Endothelial cell of umbilical vein (primary cell): ENCODE measurements at regions of chr2 and their contacts with region 1.

Region 1: GRCh38 chr2:217851191-217852020 is 151.4 kb downstream of the TNS1 start:
- DNase-seq: peak; percentile 18
- H3K4me3 ChIP-seq: no peak overlapping the region
- H3K27ac ChIP-seq: no peak overlapping the region
- H3K4me1 ChIP-seq: peaks cover 33% of the 10 kb centered on the region
- H3K27me3 ChIP-seq: no peaks in the 10 kb centered on the region
- CTCF ChIP-seq: no peak
- POLR2A ChIP-seq: no peak

Region 2: DNA sequence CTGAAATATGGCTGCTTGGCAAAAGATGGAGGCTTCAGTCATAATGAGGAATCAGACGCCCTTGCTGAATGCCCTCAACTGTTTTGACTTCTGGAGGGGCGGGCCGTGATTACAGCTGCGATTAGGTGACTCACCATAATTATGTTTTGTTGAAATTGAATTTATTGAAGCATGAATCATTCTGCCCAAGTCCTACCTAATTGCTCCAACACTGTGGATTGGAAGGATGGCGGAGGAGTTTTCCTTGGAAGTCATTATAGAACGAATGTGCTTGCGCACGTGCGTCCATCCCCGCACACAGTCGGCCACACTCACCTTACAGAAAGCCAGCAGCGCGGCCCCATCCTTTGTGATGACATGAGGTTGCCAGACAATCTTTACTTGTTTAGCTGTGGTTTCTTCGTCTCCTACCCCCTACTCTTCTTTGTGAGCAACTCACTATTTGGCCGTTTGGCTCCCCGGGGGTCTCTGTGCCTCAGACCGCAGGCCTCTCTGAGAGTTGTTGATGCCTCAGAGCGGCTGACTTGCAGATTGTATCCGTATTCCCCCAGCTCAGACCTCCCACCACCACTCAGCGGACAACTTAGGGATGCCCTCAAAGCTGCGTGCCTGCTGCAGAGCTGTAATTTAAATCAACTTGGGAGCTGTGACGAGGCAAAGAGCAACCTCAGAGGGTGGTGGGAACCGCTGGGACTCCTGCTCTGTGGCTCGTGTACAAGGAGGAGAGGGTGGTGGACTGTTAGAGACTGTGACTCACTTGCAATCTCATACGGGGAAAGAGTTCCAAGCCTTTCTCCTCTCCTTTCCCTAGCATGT is 362.1 kb before region 1 on chr2:
- CTCF ChIA-PET with region 1: no interaction called
- POLR2A ChIA-PET with region 1: no interaction called
- dilution Hi-C with region 1: no loop called
- intact Hi-C with region 1: no loop called
- DNase-seq: no peak
- H3K4me3 ChIP-seq: no peak overlapping the region
- H3K27ac ChIP-seq: no peak overlapping the region
- H3K4me1 ChIP-seq: no peaks in the 10 kb centered on the region
- H3K27me3 ChIP-seq: no peaks in the 10 kb centered on the region
- CTCF ChIP-seq: no peak
- POLR2A ChIP-seq: no peak

Region 3: DNA sequence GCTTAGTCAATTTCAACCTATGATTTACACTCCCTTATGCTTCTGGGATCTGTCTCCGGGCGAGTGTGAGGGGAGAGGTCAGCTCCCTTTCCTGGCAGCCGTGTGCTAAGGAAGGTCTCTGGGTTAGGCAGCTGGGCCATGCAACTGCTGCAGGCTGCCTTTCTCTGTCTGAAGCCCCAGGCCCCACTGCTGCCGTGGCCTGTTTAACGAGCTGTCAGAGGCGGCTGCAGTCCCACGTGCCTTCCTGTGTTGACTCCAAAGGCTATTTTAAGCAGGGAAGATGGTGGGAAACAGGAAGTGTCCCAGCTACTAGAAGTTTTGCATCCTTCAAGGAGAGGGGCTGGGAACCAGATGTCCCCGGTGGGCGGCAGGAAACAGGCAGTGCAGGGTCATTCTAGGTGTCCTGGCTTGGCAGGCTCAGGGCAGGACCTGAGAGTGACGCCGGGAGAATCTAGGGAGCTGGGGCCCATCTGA is 35.0 kb before region 1 on chr2:
- CTCF ChIA-PET with region 1: interaction called, 5 read pairs
- POLR2A ChIA-PET with region 1: no interaction called
- dilution Hi-C with region 1: no loop called
- intact Hi-C with region 1: loop called (anchors 1 kb)
- DNase-seq: peak; percentile 96
- H3K4me3 ChIP-seq: no peak overlapping the region
- H3K27ac ChIP-seq: peak overlapping the region; percentile 88
- H3K4me1 ChIP-seq: peaks cover 36% of the 10 kb centered on the region
- H3K27me3 ChIP-seq: no peaks in the 10 kb centered on the region
- CTCF ChIP-seq: no peak
- POLR2A ChIP-seq: no peak